ENCODE measurements at regions of chr13 and their contacts with region 1.

Region 1: GRCh38 chr13:99656092-99656745 is 154.9 kb downstream of the TM9SF2 start:
- DNase-seq: peak; percentile 68 to 72
- H3K4me3 ChIP-seq: no peak overlapping the region
- H3K27ac ChIP-seq: no peak overlapping the region
- H3K4me1 ChIP-seq: no peaks in the 10 kb centered on the region
- H3K27me3 ChIP-seq: no peaks in the 10 kb centered on the region
- CTCF ChIP-seq: peak; percentile 69 to 91 (median 85)
- POLR2A ChIP-seq: no peak

Region 2: DNA sequence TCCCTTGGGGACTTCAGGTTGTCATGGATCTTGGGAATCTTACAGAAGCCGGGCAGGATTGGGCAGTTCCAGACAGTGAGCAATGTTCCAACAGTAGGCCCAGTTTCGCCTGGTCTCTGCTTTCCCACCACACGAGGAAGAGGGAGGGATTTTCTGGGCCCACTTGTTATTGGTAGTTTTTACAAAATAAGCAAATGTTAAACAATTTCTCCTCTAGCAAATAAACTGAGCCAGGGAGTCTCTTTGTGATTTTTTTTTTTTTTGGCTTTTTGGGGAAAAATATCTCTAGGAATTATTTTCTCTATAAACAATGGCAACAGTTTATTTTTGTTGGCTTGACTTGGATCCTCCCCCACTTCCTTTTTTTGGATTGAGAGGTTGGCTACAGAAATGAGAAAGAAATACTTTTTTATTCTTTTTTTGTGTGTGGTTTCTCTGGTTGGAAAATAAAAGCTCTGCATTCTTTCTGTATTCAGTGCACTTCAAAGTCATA is 65.7 kb before region 1 on chr13:
- intact Hi-C with region 1: no loop called
- DNase-seq: no peak
- H3K4me3 ChIP-seq: no peak overlapping the region
- H3K27ac ChIP-seq: peak overlapping the region in 1 of 2 donors; percentile 65
- H3K4me1 ChIP-seq: no peaks in the 10 kb centered on the region
- H3K27me3 ChIP-seq: no peaks in the 10 kb centered on the region
- CTCF ChIP-seq: no peak
- POLR2A ChIP-seq: no peak

Region 3: DNA sequence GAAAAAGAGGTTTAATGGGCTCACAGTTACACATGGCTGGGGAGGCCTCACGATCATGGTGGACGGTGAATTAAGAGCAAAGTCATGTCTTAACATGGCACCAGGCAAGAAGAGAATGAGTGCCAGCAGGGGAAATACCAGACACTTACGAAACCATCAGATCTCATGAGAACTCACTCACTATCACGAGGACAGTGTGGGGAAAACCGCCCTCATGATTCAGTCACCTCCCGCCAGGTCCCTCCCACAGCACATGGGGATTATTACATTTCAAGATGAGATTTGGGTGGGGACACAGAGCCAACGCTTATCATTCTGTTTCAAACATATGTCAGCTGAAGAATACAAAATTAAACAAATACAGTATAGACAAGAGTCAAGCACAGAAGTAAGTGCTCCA is 597.8 kb after region 1 on chr13:
- intact Hi-C with region 1: loop called (anchors 10 kb)
- DNase-seq: no peak
- H3K4me3 ChIP-seq: no peak overlapping the region
- H3K27ac ChIP-seq: no peak overlapping the region
- H3K4me1 ChIP-seq: no peaks in the 10 kb centered on the region
- H3K27me3 ChIP-seq: no peaks in the 10 kb centered on the region
- CTCF ChIP-seq: no peak
- POLR2A ChIP-seq: no peak